ENCODE measurements at regions of chr20 and their contacts with region 1.

Region 1: DNA sequence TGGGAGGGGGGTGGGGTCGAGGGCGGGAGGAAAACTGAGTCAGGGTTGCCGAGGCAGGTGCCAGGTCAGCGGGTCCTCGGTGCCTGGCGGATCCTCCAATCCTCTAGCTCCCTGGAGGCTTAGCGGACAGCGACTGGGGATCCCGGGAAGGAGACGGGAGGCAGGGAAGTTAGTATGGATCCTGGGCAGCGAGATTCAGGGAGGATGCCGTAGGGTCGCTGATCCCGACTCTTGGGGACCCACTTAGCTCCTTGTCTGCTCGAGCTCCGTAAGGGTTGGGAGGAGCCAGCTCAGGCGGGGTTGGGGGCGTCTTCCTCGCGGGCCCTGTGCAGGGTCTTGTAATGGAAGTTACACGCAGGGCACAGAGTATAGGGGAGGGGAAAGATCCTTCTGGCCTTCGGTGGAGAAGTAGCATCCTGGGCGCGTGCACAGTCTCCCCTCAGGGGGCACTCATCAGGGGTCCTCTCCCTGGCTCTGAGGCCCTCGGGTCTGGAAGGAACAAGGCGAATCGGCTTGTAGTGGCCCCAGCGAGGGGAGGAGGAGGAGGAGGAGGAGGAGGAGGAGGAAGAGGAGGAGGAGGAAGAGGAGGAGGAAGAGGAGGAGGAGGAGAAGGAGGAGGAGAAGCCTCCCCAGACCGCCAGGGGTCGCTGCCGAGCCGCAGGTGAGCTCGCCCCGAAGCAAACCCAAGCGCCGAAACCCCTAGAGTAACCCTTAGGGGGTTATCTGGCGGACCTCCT is 6.4 kb upstream of the SLC12A5 start:
- DNase-seq: peak; percentile 31 to 91 (median 63)
- ATAC-seq: peak; percentile 51 to 81 (median 76)
- H3K4me3 ChIP-seq: peak overlapping the region in 1 of 4 donors; percentile 49
- H3K27ac ChIP-seq: no peak overlapping the region
- H3K4me1 ChIP-seq: peaks cover 0 to 3% (median 3%) of the 10 kb centered on the region in 3 donors
- H3K27me3 ChIP-seq: peaks cover 0 to 8% (median 0%) of the 10 kb centered on the region in 4 donors
- CTCF ChIP-seq: peak in 3 of 4 donors; percentile 44 to 61 (median 55)

Region 2: GRCh38 chr20:45987108-45987780 is 35.3 kb before region 1 on chr20:
- intact Hi-C with region 1: no loop called
- DNase-seq: peak in 5 of 6 donors; percentile 45 to 90 (median 80)
- ATAC-seq: peak; percentile 86 to 97 (median 94)
- H3K4me3 ChIP-seq: no peak overlapping the region
- H3K27ac ChIP-seq: no peak overlapping the region
- H3K4me1 ChIP-seq: no peaks in the 10 kb centered on the region
- H3K27me3 ChIP-seq: peaks cover 0 to 3% (median 0%) of the 10 kb centered on the region in 4 donors
- CTCF ChIP-seq: peak; percentile 66 to 83 (median 74)

Region 3: GRCh38 chr20:46089417-46090388 is 67.1 kb after region 1 on chr20 and contains the start of gene NCOA5:
- intact Hi-C with region 1: loop called in 1 of 3 experiments (anchors 10 kb)
- DNase-seq: peak; percentile 95 to 98 (median 96)
- ATAC-seq: peak; percentile 92 to 96 (median 94)
- H3K4me3 ChIP-seq: peak within 1 kb of the TSS; percentile 71 to 90 (median 84)
- H3K27ac ChIP-seq: peak within 1 kb of the TSS; percentile 98 to 99 (median 98)
- H3K4me1 ChIP-seq: peaks cover 20 to 41% (median 35%) of the 10 kb centered on the region in 3 donors
- H3K27me3 ChIP-seq: no peaks in the 10 kb centered on the region
- CTCF ChIP-seq: no peak
- total RNA-seq, gene NCOA5: 8.4 to 17.3 (median 12.0) TPM